CD4-positive, alpha-beta memory T cell (primary cell): ENCODE measurements at regions of chr11 and their contacts with region 1.

Region 1: DNA sequence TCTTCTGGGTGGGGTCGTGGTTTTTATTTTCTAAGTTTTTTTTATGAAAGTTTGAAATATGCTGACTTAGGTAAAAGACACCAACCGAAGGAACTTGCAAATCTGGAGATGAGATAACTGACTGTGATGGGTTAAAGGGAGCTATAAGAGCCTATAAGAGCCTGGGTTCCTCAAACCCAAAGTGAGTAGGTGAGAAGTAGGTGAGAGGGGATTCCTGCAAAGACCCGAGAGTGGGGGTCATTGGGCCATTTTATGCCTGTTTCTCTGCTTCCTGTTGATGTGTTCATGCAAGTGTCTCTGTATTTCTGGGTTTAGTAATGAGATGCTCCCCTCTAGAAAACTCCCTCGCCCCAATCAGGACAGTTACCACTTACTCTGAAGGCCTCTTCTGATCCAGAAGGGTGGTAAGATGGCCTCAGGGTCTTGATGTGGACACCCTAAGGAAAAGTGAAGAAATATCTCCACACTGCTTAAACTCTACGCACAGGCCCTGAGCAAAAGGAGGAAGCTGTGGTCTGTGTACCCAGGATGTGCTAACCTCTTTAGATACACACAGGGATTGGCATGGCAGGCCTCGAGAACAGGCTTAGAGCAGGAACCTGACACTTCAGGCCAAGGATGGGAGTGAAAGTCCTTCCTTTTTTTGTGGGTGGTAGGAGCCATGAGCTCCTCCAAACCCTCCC is 1.8 kb downstream of the FLI1 start:
- DNase-seq: peak; percentile 51 to 73 (median 64)
- H3K4me3 ChIP-seq: peak overlapping the region; percentile 77 to 79
- H3K4me3 Mint-ChIP-seq: peak overlapping the region; percentile 94 to 99 (median 96)
- H3K27ac ChIP-seq: peak overlapping the region; percentile 77
- H3K27ac Mint-ChIP-seq: peak overlapping the region; percentile 95 to 99 (median 96)
- H3K4me1 ChIP-seq: peaks cover 59% of the 10 kb centered on the region
- H3K4me1 Mint-ChIP-seq: peaks cover 44 to 84% (median 56%) of the 10 kb centered on the region in 4 donors
- H3K27me3 ChIP-seq: no peaks in the 10 kb centered on the region
- H3K27me3 Mint-ChIP-seq: peaks cover 0 to 6% of the 10 kb centered on the region in 2 donors

Region 2: GRCh38 chr11:128707681-128708080 is 12.0 kb after region 1 on chr11:
- CTCF ChIA-PET with region 1: interaction called, 7 read pairs
- POLR2A ChIA-PET with region 1: interaction called, 153 read pairs
- intact Hi-C with region 1: loop called (anchors 1 kb)
- DNase-seq: no peak
- H3K4me3 ChIP-seq: no peak overlapping the region
- H3K4me3 Mint-ChIP-seq: peak overlapping the region in 5 of 8 donors; percentile 17 to 75 (median 58)
- H3K27ac ChIP-seq: no peak overlapping the region
- H3K27ac Mint-ChIP-seq: peak overlapping the region; percentile 20 to 81 (median 69)
- H3K4me1 ChIP-seq: peaks cover 100% of the 10 kb centered on the region
- H3K4me1 Mint-ChIP-seq: peaks cover 78 to 99% (median 94%) of the 10 kb centered on the region in 4 donors
- H3K27me3 ChIP-seq: no peaks in the 10 kb centered on the region
- H3K27me3 Mint-ChIP-seq: no peaks in the 10 kb centered on the region

Region 3: GRCh38 chr11:128725630-128726319 is 30.1 kb after region 1 on chr11:
- CTCF ChIA-PET with region 1: interaction called, 4 read pairs
- POLR2A ChIA-PET with region 1: interaction called, 67 read pairs
- intact Hi-C with region 1: loop called (anchors 1 kb)
- DNase-seq: peak; percentile 84 to 89 (median 88)
- H3K4me3 ChIP-seq: peak overlapping the region; percentile 55 to 58
- H3K4me3 Mint-ChIP-seq: peak overlapping the region; percentile 78 to 92 (median 87)
- H3K27ac ChIP-seq: peak overlapping the region; percentile 49
- H3K27ac Mint-ChIP-seq: peak overlapping the region; percentile 91 to 98 (median 95)
- H3K4me1 ChIP-seq: peaks cover 99% of the 10 kb centered on the region
- H3K4me1 Mint-ChIP-seq: peaks cover 87 to 100% (median 97%) of the 10 kb centered on the region in 4 donors
- H3K27me3 ChIP-seq: no peaks in the 10 kb centered on the region
- H3K27me3 Mint-ChIP-seq: peaks cover 0 to 3% of the 10 kb centered on the region in 2 donors

Region 4: GRCh38 chr11:128738942-128739341 is 43.3 kb after region 1 on chr11:
- CTCF ChIA-PET with region 1: interaction called, 8 read pairs
- POLR2A ChIA-PET with region 1: interaction called, 33 read pairs
- intact Hi-C with region 1: loop called (anchors 5 kb)
- DNase-seq: peak; percentile 36 to 51 (median 48)
- H3K4me3 ChIP-seq: peak overlapping the region in 1 of 2 donors; percentile 5
- H3K4me3 Mint-ChIP-seq: peak overlapping the region; percentile 61 to 84 (median 76)
- H3K27ac ChIP-seq: peak overlapping the region; percentile 30
- H3K27ac Mint-ChIP-seq: peak overlapping the region; percentile 82 to 95 (median 94)
- H3K4me1 ChIP-seq: peaks cover 96% of the 10 kb centered on the region
- H3K4me1 Mint-ChIP-seq: peaks cover 71 to 99% (median 82%) of the 10 kb centered on the region in 4 donors
- H3K27me3 ChIP-seq: no peaks in the 10 kb centered on the region
- H3K27me3 Mint-ChIP-seq: no peaks in the 10 kb centered on the region

Region 5: DNA sequence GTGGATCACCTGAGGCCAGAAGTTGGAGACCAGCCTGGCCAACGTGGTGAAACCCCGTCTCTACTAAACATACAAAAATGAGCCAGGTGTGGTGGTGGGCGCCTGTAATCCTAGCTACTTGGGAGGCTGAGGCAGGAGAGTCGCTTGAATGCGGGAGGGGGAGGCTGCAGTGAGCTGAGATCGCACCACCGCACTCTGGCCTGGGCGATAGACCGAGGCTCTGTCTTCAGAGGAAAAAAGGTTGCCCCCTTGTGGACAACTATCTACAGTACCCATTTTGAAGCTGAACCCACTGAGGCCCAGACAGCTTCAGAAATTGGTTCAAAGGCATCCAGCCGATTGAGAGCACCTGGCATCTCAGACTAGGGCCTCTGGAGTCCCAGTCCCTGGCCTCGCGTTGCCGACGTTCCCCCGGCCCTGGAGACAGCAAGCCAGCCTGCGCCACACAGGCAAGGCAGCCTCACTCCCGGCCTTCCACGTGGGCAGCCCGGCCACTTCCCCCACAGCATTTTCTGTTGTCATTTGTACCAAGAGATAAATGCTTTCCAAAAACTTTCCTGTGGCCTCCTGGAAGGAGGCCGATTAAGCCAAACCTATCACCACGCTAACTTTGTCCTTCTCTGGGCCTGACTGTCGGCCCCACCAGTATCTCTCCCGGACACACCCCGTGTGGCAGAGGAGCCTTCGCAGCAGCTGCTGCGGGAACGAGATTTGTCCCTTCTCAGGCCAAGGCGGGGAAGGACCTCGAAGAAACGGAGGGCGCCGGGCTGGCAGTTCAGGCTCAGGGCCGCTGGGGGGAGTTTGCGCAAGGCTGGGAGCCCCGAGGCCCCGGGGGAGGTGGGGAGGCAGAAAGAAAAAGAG is 81.0 kb after region 1 on chr11:
- CTCF ChIA-PET with region 1: interaction called, 4 read pairs
- POLR2A ChIA-PET with region 1: interaction called, 11 read pairs
- intact Hi-C with region 1: no loop called
- DNase-seq: peak; percentile 43 to 61 (median 56)
- H3K4me3 ChIP-seq: no peak overlapping the region
- H3K4me3 Mint-ChIP-seq: peak overlapping the region in 4 of 8 donors; percentile 21 to 63 (median 36)
- H3K27ac ChIP-seq: no peak overlapping the region
- H3K27ac Mint-ChIP-seq: peak overlapping the region; percentile 62 to 91 (median 81)
- H3K4me1 ChIP-seq: peaks cover 62% of the 10 kb centered on the region
- H3K4me1 Mint-ChIP-seq: peaks cover 56 to 93% (median 72%) of the 10 kb centered on the region in 4 donors
- H3K27me3 ChIP-seq: no peaks in the 10 kb centered on the region
- H3K27me3 Mint-ChIP-seq: no peaks in the 10 kb centered on the region

Region 6: DNA sequence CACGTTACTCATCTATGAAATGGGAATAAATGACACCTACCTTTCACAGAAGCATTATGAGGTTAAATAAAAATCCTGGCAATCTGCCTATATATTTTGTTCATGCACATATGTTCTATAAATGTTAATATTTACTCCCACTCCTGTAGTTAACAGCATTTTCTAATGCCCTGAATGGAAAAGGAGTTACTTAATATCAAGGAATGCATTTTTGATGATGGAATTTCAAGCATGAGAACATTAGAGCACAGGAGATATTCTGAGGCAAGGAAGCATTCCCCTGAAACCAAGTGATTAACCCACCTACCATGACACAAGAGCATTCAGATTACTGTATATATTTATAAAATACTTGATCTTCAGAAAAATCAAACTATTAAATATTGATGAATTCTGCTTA is 394.4 kb after region 1 on chr11:
- CTCF ChIA-PET with region 1: no interaction called
- POLR2A ChIA-PET with region 1: no interaction called
- intact Hi-C with region 1: no loop called
- DNase-seq: no peak
- H3K4me3 ChIP-seq: no peak overlapping the region
- H3K4me3 Mint-ChIP-seq: no peak overlapping the region
- H3K27ac ChIP-seq: no peak overlapping the region
- H3K27ac Mint-ChIP-seq: no peak overlapping the region
- H3K4me1 ChIP-seq: no peaks in the 10 kb centered on the region
- H3K4me1 Mint-ChIP-seq: no peaks in the 10 kb centered on the region
- H3K27me3 ChIP-seq: no peaks in the 10 kb centered on the region
- H3K27me3 Mint-ChIP-seq: no peaks in the 10 kb centered on the region